ENCODE measurements at regions of chr6 and their contacts with region 1.

Region 1: DNA sequence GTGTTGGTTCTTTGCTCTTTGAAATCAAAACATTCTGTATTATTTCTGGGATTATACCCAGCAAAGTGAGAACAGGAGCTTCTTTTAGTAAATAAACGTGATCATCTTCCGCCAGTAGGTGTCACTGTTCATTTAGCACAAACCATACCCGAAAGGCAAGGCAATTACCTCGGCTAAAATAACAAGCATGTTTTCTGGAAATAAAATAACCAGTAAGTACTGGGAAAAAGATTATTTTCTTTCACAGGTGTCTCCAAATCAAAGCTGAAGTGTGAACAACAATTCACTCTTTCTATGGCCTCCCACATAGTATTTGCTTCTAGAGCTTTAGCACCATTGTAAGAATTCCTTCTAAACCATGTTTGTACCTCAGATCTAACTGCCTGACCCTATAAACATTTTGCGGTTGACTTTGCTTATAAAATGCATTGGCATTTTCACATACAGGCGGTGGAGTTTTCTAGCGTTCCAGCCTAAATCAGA is 144.6 kb upstream of the AGPAT4 start:
- DNase-seq: peak; percentile 25
- H3K4me3 ChIP-seq: no peak overlapping the region
- H3K27me3 ChIP-seq: peaks cover 5% of the 10 kb centered on the region
- CTCF ChIP-seq: peak; percentile 66

Region 2: DNA sequence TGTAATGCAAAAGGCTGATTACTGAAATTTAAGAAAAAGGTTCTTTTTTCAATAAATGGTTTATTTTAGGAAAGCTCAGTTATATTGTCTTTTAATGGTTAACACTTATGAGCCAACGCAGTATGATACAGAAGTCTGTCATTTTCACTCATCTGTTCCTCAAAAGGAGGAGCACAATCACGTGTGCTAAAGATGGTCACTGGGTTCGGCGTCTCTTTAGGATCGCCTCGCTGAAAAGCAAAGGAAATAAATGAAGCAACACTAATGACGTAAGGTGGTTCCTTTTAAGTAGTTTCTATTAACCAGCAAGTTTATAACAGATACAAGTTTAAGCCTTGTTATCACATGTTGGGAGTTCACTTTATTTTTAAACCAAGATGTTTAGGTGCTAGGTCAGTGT is 301.2 kb before region 1 on chr6:
- CTCF ChIA-PET with region 1: no interaction called
- POLR2A ChIA-PET with region 1: no interaction called
- DNase-seq: no peak
- H3K4me3 ChIP-seq: no peak overlapping the region
- H3K27me3 ChIP-seq: no peaks in the 10 kb centered on the region
- CTCF ChIP-seq: no peak

Region 3: GRCh38 chr6:161406646-161407045 is 11.9 kb before region 1 on chr6:
- CTCF ChIA-PET with region 1: interaction called, 11 read pairs
- POLR2A ChIA-PET with region 1: interaction called, 5 read pairs
- DNase-seq: no peak
- H3K4me3 ChIP-seq: no peak overlapping the region
- H3K27me3 ChIP-seq: no peaks in the 10 kb centered on the region
- CTCF ChIP-seq: no peak

Region 4: GRCh38 chr6:161429921-161430490 is 11.5 kb after region 1 on chr6:
- CTCF ChIA-PET with region 1: interaction called, 17 read pairs
- POLR2A ChIA-PET with region 1: no interaction called
- DNase-seq: no peak
- H3K4me3 ChIP-seq: no peak overlapping the region
- H3K27me3 ChIP-seq: no peaks in the 10 kb centered on the region
- CTCF ChIP-seq: peak; percentile 31; the same call in 1 of the 2 replicates

Region 5: DNA sequence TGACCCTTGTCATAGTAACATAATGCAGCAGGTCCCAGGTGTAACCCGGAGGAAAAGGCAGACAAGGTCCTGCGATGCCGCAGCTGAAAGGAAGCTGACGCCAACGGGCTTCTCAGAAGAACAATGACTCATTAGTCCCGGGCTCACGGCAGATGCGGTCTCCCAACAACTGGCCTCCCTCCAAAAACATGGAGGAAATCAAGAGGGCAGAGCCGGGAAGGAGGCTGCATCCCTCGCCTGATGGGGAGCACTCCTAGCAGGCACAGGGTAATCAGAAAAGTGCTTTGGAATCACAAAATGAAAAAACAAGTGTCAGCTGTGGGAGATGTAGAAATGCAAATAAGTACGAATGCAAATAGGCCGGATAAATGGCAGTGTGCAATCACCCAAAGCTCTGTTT is 20.6 kb after region 1 on chr6:
- CTCF ChIA-PET with region 1: interaction called, 12 read pairs
- POLR2A ChIA-PET with region 1: no interaction called
- DNase-seq: peak; percentile 54
- H3K4me3 ChIP-seq: no peak overlapping the region
- H3K27me3 ChIP-seq: no peaks in the 10 kb centered on the region
- CTCF ChIP-seq: no peak

Region 6: DNA sequence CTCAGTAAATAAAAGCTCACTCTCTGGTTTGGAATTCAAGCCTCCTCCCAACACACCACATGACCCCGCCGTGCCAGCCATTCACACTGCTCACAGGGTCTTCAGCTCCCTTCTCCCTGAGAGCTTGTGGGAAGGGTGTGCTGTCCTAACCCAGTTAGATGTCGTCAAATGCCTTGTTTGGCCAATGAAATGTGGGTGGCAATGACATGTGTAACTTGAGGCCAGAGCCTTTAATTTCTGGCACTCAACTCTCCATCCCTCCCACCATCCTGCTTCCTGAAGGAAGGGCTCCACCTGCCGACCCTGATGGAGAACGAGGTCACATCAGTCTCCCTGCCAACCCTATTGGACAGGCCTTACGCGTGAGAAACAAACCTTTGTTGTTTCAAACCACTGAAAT is 79.9 kb after region 1 on chr6:
- CTCF ChIA-PET with region 1: interaction called, 28 read pairs
- POLR2A ChIA-PET with region 1: no interaction called
- DNase-seq: no peak
- H3K4me3 ChIP-seq: no peak overlapping the region
- H3K27me3 ChIP-seq: no peaks in the 10 kb centered on the region; the same call in 1 of the 2 replicates
- CTCF ChIP-seq: peak; percentile 34

Region 7: DNA sequence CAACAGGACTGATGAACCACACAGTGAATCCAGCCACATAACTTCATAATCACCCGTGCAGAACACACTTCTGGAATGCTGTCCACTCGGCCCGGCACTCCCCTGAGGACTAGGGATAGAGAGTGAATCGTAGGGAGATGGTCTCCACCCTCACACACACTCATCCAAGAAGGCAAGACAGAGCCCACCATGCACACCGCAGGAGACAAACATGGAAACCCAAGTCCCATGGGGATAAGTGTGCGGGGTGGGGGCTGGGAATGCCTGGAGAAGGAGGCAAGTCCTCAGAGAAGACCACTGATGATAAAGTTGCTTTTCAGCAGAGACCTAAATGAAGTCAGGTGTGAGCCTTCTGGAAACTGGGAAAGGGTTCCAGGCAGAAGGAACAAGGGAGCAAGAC is 254.5 kb after region 1 on chr6:
- CTCF ChIA-PET with region 1: no interaction called
- POLR2A ChIA-PET with region 1: no interaction called
- DNase-seq: no peak
- H3K4me3 ChIP-seq: no peak overlapping the region
- H3K27me3 ChIP-seq: no peaks in the 10 kb centered on the region
- CTCF ChIP-seq: no peak

Region 8: GRCh38 chr6:161694995-161695394 is 276.5 kb after region 1 on chr6:
- CTCF ChIA-PET with region 1: interaction called, 24 read pairs
- POLR2A ChIA-PET with region 1: no interaction called
- DNase-seq: no peak
- H3K4me3 ChIP-seq: no peak overlapping the region
- H3K27me3 ChIP-seq: no peaks in the 10 kb centered on the region
- CTCF ChIP-seq: peak; percentile 53